Mucosa of descending colon (tissue), 3 donors: ENCODE measurements at regions of chr15 and their contacts with region 1.

Region 1: DNA sequence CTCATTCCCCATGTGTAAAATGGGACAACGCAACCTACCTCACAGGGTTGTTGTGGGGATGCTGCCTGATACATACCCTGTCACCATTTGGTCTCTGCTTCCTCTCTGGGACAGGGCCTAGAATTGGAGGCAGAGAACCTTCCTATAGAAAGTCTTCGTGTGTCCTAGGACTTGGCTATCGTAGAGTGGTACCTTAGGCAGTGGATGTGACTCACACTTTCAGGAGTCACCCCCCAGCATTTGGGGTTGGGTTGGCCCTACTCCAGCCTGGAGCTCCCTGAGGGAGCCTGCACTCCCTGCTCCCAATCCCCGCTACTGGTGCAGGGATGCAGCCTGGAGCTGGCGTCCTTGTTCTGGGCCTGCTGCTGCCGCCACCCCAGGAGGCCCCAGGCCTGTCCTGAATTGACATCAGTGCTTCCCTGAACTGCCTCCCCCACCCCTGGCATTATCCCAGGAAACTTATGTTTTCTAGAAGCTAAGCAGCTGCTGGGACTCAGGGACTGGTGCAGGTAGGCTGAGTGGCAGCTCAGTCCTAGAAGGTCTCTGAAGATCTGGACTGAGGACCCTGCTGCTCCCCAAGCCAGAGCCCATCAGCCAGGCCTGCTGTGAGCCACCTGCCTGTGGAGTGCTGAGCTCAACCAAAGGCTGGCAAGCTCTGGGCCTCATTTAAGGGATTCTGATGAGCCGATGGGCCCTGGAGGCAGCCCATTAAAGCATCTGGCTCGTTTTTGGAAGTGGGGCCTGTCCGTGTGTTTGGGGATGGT is 9.9 kb downstream of the C15orf39 start:
- DNase-seq: no peak
- ATAC-seq: no peak
- H3K4me3 ChIP-seq: no peak overlapping the region
- H3K4me1 ChIP-seq: peaks cover 4% of the 10 kb centered on the region
- CTCF ChIP-seq: no peak

Region 2: DNA sequence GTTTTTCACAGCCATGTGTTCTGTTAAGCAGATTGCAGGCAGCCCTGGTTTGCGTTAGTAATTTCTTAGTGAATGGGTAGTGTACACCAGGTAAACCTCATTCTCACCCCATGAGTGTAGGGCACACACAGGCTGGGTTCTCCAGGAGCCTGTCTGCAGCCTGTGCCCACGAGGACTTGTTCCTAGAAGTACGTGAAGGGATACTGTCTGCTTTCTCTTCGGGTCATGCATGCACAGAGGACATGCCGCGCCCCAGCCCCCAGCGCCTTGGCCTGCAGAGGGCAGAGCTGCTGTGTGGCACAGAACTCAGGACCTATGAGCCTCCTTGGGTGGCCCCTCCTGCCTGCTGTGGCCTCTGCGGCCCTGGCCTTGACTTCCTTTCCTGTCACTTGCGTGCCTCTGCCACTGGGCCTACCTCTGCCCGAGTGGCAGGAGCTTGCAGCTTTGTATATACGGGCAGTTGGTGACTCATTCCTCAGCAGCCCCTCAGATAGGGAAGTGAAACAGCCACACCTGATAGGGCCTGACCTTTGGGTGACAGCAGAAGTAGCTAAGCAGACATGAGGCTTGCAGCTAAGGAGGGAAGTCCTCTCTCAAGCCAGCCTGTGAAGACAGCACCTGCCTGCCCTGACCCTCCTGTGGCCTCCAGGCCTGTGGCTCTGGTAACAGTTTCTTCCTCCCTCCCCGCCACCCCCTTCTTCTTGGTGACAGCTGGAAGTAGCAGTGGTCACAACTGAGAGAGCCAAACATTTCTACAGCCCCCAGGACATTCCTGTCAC is 168.7 kb before region 1 on chr15:
- intact Hi-C with region 1: loop called in 1 of 2 experiments (anchors 5 kb)
- DNase-seq: peak; percentile 88 to 94 (median 91)
- ATAC-seq: peak; percentile 86
- H3K4me3 ChIP-seq: no peak overlapping the region
- H3K4me1 ChIP-seq: peaks cover 49% of the 10 kb centered on the region
- CTCF ChIP-seq: peak; percentile 62